PC-9 (cell line): ENCODE measurements at regions of chr2 and their contacts with region 1.

Region 1: GRCh38 chr2:240387669-240388358 is 47.6 kb upstream of the GPC1 start:
- DNase-seq: peak; percentile 88 to 95
- H3K4me3 ChIP-seq: peak overlapping the region; percentile 48; the same call in 1 of the 2 replicates
- H3K27ac ChIP-seq: peak overlapping the region; percentile 75
- H3K4me1 ChIP-seq: peaks cover 27% of the 10 kb centered on the region
- H3K27me3 ChIP-seq: no peaks in the 10 kb centered on the region
- CTCF ChIP-seq: no peak

Region 2: GRCh38 chr2:239846789-239847676 is 540.8 kb before region 1 on chr2:
- CTCF ChIA-PET with region 1: no interaction called
- POLR2A ChIA-PET with region 1: no interaction called
- intact Hi-C with region 1: no loop called
- DNase-seq: no peak
- H3K4me3 ChIP-seq: no peak overlapping the region
- H3K27ac ChIP-seq: no peak overlapping the region
- H3K4me1 ChIP-seq: no peaks in the 10 kb centered on the region
- H3K27me3 ChIP-seq: peaks cover 40% of the 10 kb centered on the region
- CTCF ChIP-seq: no peak

Region 3: GRCh38 chr2:240250985-240251847 is 136.6 kb before region 1 on chr2:
- CTCF ChIA-PET with region 1: interaction called, 4 read pairs
- POLR2A ChIA-PET with region 1: no interaction called
- intact Hi-C with region 1: loop called (anchors 1 kb)
- DNase-seq: peak; percentile 92 to 98
- H3K4me3 ChIP-seq: peak overlapping the region; percentile 48; the same call in 1 of the 2 replicates
- H3K27ac ChIP-seq: peak overlapping the region; percentile 86
- H3K4me1 ChIP-seq: peaks cover 39% of the 10 kb centered on the region
- H3K27me3 ChIP-seq: no peaks in the 10 kb centered on the region
- CTCF ChIP-seq: no peak

Region 4: DNA sequence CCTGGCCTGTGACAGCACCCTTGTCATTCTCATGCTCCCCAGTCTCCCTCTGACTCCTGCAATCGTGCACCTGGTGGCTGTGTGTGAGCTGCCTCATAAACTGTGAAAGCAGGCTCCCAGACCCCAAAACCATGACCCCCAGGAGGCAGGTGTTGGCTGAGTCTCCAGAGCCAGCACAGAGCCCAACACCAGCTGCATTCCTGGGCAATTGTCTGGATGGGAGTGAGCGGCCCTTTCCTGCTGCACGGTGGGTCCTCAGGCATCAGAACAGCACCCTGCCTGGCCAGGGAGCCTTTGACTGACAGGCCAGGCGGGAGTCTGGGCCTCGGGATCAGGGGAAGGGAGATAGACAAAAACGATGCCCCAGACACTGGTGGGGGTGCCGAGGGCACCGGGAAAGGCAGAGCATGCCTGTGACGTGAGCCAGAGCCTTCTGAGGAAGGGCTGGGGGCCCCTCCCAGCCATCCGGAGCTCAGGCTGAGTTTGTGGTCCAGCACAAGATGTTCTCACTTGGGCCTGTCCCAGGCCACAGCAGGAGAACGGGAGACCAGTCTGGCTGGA is 87.5 kb before region 1 on chr2:
- CTCF ChIA-PET with region 1: no interaction called
- POLR2A ChIA-PET with region 1: no interaction called
- intact Hi-C with region 1: no loop called
- DNase-seq: no peak
- H3K4me3 ChIP-seq: no peak overlapping the region
- H3K27ac ChIP-seq: no peak overlapping the region
- H3K4me1 ChIP-seq: no peaks in the 10 kb centered on the region
- H3K27me3 ChIP-seq: peaks cover 36% of the 10 kb centered on the region
- CTCF ChIP-seq: no peak

Region 5: DNA sequence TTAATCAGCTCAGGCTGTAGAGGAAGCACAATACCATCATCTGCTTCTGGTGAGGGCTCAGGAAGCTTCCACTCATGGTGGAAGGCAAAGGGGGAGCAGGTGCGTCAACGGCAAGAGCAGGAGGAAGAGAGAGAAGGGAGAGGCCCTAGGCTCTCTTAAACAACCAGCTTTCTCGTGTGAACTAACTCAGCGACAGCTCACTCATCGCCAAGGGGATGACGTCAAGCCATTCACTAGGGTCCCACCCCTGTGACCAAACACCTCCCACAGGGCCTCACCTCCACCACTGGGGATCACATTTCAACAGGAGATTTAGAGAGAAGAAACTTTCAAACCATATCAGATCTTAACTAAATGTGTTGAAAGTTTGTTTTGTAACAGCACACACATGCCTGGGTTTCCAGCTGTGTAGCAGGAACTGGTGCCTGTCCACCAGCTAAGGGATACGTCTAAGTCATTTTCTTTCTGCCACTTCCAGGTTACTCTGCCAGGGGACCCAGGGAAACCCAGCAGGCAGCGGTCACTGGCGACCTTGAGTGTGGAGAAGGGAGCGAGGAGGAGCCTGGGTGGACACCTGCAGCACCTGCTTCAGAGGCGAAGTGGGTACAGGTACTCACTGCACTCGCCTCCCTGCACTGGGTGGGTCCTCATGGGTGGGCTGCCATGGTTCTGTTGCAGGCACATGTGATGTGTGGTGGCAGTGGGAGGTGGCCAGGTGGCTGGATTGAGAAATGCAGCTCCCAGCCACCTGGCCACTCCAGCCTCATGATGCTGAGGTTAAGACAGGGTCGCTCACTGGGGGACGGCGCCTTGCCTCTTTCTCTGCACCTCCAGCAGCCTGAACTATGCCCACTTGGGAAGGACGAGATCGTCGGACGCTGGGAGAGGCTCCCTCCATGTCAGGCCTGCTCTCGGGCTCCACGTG is 39.2 kb after region 1 on chr2:
- CTCF ChIA-PET with region 1: no interaction called
- POLR2A ChIA-PET with region 1: interaction called, 16 read pairs
- intact Hi-C with region 1: loop called (anchors 2 kb)
- DNase-seq: peak; percentile 91 to 95
- H3K4me3 ChIP-seq: peak overlapping the region; percentile 9; the same call in 1 of the 2 replicates
- H3K27ac ChIP-seq: peak overlapping the region; percentile 78
- H3K4me1 ChIP-seq: peaks cover 25% of the 10 kb centered on the region
- H3K27me3 ChIP-seq: no peaks in the 10 kb centered on the region
- CTCF ChIP-seq: no peak

Region 6: GRCh38 chr2:240441331-240441992 is 53.6 kb after region 1 on chr2:
- CTCF ChIA-PET with region 1: no interaction called
- POLR2A ChIA-PET with region 1: no interaction called
- intact Hi-C with region 1: no loop called
- DNase-seq: no peak
- H3K4me3 ChIP-seq: no peak overlapping the region
- H3K27ac ChIP-seq: no peak overlapping the region
- H3K4me1 ChIP-seq: peaks cover 21% of the 10 kb centered on the region
- H3K27me3 ChIP-seq: no peaks in the 10 kb centered on the region
- CTCF ChIP-seq: no peak